Activated CD4-positive, alpha-beta memory T cell treated with anti-CD3 and anti-CD28 coated beads for 36 hours (primary cell): ENCODE measurements at regions of chr1 and their contacts with region 1.

Region 1: DNA sequence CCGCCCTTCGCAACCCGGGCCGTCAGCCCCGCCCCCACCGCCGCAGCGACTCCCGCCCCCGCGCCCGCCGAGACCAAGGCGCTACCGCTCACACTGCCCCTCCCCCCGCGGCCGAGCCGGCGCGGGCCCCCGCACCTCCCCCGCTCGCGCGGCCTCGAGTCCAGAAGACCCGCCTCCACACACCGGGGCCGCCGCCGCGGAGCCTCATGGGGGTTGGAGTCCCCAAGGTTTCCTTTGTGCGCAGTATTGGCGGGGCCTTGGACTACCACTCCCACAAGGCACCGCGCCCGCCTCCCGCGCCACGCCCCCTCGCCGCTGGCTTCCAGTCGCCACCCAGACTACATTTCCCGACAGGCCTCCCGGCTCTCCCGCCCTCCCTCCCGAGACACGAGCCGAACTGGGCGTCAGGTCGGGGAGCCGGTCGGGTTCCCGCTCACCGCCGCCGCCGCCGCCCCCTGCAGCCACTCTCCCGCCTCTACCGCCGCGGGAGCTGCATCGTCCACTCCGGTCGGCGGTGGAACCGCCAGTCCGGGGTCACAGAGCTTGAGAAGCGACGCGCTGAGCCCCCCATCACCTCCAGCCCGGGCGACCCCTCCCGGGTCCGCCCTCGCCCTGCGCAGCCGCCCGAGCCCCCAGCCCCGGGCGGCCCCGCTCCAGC is at the start of gene PHF13:
- DNase-seq: peak; percentile 100
- H3K4me3 Mint-ChIP-seq: peak within 1 kb of the TSS; percentile 83
- H3K27ac Mint-ChIP-seq: peak within 1 kb of the TSS; percentile 74
- H3K4me1 Mint-ChIP-seq: peaks cover 23% of the 10 kb centered on the region
- H3K27me3 Mint-ChIP-seq: no peaks in the 10 kb centered on the region
- total RNA-seq, gene PHF13: 16.8 to 16.9 TPM

Region 2: GRCh38 chr1:6287431-6287886 is 326.0 kb before region 1 on chr1:
- CTCF ChIA-PET with region 1: no interaction called
- POLR2A ChIA-PET with region 1: no interaction called
- intact Hi-C with region 1: no loop called
- DNase-seq: no peak
- H3K4me3 Mint-ChIP-seq: no peak overlapping the region
- H3K27ac Mint-ChIP-seq: no peak overlapping the region
- H3K4me1 Mint-ChIP-seq: no peaks in the 10 kb centered on the region
- H3K27me3 Mint-ChIP-seq: no peaks in the 10 kb centered on the region

Region 3: DNA sequence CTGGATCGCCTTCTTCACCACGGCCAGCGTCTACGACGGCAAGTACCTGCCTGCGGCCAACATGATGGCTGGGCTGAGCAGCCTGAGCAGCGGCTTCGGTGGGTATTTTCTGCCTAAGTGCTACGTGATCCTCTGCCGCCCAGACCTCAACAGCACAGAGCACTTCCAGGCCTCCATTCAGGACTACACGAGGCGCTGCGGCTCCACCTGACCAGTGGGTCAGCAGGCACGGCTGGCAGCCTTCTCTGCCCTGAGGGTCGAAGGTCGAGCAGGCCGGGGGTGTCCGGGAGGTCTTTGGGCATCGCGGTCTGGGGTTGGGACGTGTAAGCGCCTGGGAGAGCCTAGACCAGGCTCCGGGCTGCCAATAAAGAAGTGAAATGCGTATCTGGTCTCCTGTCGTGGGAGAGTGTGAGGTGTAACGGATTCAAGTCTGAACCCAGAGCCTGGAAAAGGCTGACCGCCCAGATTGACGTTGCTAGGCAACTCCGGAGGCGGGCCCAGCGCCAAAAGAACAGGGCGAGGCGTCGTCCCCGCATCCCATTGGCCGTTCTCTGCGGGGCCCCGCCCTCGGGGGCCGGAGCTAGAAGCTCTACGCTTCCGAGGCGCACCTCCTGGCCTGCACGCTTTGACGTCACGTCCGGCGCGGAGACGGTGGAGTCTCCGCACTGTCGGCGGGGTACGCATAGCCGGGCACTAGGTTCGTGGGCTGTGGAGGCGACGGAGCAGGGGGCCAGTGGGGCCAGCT is 33.9 kb before region 1 on chr1 and contains the start of gene ZBTB48:
- CTCF ChIA-PET with region 1: no interaction called
- POLR2A ChIA-PET with region 1: no interaction called
- intact Hi-C with region 1: loop called (anchors 1 kb)
- DNase-seq: peak; percentile 98
- H3K4me3 Mint-ChIP-seq: peak within 1 kb of the TSS; percentile 94
- H3K27ac Mint-ChIP-seq: peak within 1 kb of the TSS; percentile 87
- H3K4me1 Mint-ChIP-seq: peaks cover 35% of the 10 kb centered on the region
- H3K27me3 Mint-ChIP-seq: no peaks in the 10 kb centered on the region
- total RNA-seq, gene ZBTB48: 24.6 to 28.1 TPM

Region 4: GRCh38 chr1:6624710-6625583 is 11.5 kb after region 1 on chr1 and contains the start of gene THAP3:
- CTCF ChIA-PET with region 1: no interaction called
- POLR2A ChIA-PET with region 1: no interaction called
- intact Hi-C with region 1: loop called (anchors 1 kb)
- DNase-seq: peak; percentile 93
- H3K4me3 Mint-ChIP-seq: peak within 1 kb of the TSS; percentile 91
- H3K27ac Mint-ChIP-seq: peak within 1 kb of the TSS; percentile 71
- H3K4me1 Mint-ChIP-seq: peaks cover 25% of the 10 kb centered on the region
- H3K27me3 Mint-ChIP-seq: no peaks in the 10 kb centered on the region
- total RNA-seq, gene THAP3: 22.8 TPM